ENCODE measurements at regions of chr10 and their contacts with region 1.

Region 1: DNA sequence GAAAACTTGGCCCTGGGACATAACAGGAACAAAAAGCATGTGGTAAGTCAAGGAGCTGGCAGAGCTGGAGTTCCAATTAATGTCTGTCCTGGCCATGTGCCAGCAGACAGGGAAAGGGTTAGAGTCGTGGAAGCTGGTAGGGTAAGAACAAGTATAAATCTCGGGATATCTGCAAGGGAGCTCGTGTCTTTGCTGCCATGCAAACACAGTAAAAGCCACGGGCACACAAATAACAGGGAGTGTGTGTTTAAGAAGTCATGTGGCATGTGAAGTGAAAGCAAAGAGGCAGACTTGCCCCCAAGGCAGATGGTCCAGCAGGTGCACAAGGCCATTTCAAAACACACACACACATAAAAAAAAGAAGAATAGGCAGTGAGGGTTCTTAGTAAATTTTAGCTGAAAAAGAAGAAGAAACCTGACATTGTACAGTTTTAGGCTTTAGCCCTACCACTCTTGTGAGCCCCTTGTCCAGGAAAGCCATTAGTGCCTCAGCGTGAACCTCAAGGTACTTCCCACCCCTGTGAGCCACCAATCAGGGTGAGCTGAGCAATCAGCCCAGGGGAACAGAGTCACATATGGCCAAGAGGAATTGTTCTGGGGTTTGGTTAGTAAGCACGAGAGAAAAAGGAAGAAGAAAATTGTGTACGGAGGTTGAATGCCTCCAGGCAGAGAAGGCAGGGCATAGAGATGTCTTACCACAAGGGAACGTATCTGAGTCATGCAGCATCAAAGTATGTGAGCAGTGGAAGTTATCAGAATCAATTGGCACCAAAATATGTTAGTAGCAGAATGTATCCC is 32.8 kb upstream of the ARHGAP12 start:
- DNase-seq: peak; percentile 74 to 95
- H3K4me3 ChIP-seq: peak overlapping the region; percentile 19; the same call in 1 of the 2 replicates
- H3K27ac ChIP-seq: peak overlapping the region; percentile 88
- H3K4me1 ChIP-seq: peaks cover 67% of the 10 kb centered on the region
- H3K27me3 ChIP-seq: no peaks in the 10 kb centered on the region
- CTCF ChIP-seq: no peak

Region 2: GRCh38 chr10:31867646-31868045 is 93.8 kb before region 1 on chr10:
- CTCF ChIA-PET with region 1: no interaction called
- POLR2A ChIA-PET with region 1: no interaction called
- intact Hi-C with region 1: no loop called
- DNase-seq: peak in 1 of 2 experiments; percentile 34
- H3K4me3 ChIP-seq: no peak overlapping the region
- H3K27ac ChIP-seq: peak overlapping the region; percentile 43
- H3K4me1 ChIP-seq: 0 out of 2 replicates have a peak, but pooled peaks cover 6% of the 10 kb centered on the region
- H3K27me3 ChIP-seq: no peaks in the 10 kb centered on the region
- CTCF ChIP-seq: no peak

Region 3: DNA sequence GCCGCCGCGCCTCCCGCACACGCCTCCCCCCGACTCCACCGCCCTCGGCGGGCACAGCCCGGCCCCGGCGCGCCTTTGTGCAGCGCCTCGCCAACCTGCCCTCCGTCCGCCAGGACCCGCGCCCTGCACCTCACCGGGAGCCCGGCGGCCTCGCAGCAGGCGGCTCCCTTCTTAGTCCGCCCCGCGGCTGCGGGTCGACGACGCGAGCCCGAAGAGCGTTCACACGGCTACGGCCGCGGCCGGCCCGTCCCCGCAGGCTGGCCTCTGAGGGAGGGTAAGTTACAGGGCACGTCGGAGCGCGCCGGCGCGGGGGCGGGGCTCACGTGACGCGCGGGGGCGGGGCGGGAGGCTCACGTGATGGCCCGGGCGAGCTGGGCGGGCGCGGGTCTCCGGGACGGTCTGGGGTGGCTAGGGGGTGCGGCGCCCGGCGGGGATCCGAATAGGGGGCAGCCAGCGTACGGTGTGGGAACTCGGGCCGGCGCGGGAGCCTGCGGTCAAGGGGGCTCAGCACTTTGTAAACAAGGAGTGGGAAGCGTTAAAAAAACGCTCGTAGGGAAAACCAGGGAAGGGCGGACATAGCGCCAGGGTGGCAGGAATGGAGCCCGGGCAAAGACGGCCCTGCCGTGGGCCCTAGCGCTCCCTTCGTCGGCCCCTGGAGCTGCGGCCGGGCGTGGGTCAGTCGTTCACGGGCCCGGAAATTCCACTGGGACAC is 32.8 kb before region 1 on chr10 and contains the start of gene ARHGAP12:
- CTCF ChIA-PET with region 1: no interaction called
- POLR2A ChIA-PET with region 1: interaction called, 5 read pairs
- intact Hi-C with region 1: loop called (anchors 5 kb)
- DNase-seq: peak; percentile 51 to 91
- H3K4me3 ChIP-seq: peak within 1 kb of the TSS; percentile 77
- H3K27ac ChIP-seq: peak within 1 kb of the TSS; percentile 69
- H3K4me1 ChIP-seq: peaks cover 49% of the 10 kb centered on the region
- H3K27me3 ChIP-seq: no peaks in the 10 kb centered on the region
- CTCF ChIP-seq: no peak
- total RNA-seq, gene ARHGAP12: 34.3 and 51.9 TPM in 2 replicates

Region 4: DNA sequence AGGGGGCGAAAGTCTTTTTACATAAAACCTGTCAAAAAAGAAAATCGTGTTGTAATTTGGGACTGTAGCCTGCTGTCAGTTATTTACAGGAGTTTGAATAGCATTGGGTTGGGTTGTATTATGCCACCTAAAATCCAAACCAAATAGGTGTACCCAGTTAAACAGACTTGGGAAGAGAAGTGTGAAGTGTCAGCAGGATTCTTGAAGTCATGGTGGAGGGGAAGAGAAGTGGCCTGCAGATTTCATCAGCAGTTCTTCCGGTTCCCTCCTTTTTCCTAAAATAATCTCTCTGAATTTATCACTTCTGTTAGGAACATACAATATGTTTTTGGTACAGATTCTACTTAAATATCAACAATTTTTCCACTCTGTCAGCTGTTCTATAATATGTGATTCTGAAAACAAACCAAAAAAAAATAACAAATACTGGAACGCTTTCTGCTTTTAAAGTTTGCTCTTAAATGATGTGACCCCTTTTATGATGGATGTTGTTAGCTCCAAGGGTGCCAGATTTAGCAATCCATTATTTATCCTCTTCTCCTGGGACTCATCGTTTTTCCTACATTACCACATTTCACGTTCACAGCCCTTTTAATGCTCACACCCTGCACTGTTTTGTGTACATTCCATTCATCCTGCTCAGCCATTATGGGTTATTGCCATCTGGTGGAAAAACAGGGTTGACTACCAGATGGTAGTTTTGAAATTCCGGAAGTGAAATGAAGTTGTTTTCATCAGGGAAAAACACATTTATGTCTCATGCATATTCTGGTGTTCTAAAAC is 14.1 kb before region 1 on chr10:
- CTCF ChIA-PET with region 1: no interaction called
- POLR2A ChIA-PET with region 1: no interaction called
- intact Hi-C with region 1: loop called (anchors 2 kb)
- DNase-seq: peak; percentile 46 to 87
- H3K4me3 ChIP-seq: no peak overlapping the region; the same call in 1 of the 2 replicates
- H3K27ac ChIP-seq: peak overlapping the region; percentile 75
- H3K4me1 ChIP-seq: peaks cover 54% of the 10 kb centered on the region
- H3K27me3 ChIP-seq: no peaks in the 10 kb centered on the region
- CTCF ChIP-seq: peak; percentile 47

Region 5: GRCh38 chr10:32005050-32005449 is 43.6 kb after region 1 on chr10:
- CTCF ChIA-PET with region 1: no interaction called
- POLR2A ChIA-PET with region 1: no interaction called
- intact Hi-C with region 1: no loop called
- DNase-seq: peak; percentile 35 to 50
- H3K4me3 ChIP-seq: no peak overlapping the region
- H3K27ac ChIP-seq: no peak overlapping the region
- H3K4me1 ChIP-seq: no peaks in the 10 kb centered on the region
- H3K27me3 ChIP-seq: no peaks in the 10 kb centered on the region
- CTCF ChIP-seq: peak; percentile 65

Measured in PC-9 (cell line).